ENCODE measurements at regions of chr12 and their contacts with region 1.

Region 1: DNA sequence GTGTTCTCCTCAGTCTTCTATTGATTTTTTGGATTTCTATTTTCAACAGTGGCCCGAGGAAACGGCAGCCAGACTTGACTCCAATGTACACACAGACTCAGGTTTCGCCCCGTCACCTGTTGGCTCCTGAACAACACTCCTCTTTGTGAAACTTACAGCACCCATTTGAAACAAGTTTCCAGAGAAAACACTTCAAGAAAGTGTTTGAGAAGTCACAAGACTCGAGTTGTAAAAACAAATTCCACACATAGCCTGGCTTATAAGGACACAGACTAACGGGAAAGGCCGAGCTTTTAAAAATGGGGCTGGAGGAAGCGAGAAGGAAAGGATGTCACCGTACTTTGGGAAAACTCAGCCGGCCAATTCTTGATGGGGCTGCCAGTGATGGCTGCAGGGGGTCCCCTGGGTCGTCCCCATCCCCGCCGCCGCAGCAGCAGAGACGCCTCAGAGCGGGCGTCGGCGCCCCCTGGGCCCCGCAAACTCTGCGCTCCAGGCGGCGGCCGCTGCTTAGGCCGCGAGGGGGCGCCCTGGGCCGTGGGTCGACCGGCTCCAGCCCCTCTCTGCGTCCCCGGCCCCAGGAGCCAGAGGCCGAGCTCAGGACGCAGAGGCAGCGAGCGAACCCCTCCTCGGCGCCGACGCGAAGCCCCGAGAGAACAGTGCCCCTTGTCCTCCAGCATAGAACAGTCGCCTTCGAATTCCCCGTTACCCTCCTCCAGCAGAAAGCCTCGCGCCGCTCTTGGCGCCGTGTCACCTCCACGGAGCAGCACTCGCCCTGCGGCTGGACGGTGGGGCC is 106.9 kb downstream of the PRICKLE1 start:
- DNase-seq: peak; percentile 61
- H3K4me3 Mint-ChIP-seq: peak overlapping the region; percentile 91
- H3K27ac Mint-ChIP-seq: no peak overlapping the region
- H3K4me1 Mint-ChIP-seq: peaks cover 8% of the 10 kb centered on the region
- H3K27me3 Mint-ChIP-seq: no peaks in the 10 kb centered on the region
- CTCF ChIP-seq: peak; percentile 82

Region 2: DNA sequence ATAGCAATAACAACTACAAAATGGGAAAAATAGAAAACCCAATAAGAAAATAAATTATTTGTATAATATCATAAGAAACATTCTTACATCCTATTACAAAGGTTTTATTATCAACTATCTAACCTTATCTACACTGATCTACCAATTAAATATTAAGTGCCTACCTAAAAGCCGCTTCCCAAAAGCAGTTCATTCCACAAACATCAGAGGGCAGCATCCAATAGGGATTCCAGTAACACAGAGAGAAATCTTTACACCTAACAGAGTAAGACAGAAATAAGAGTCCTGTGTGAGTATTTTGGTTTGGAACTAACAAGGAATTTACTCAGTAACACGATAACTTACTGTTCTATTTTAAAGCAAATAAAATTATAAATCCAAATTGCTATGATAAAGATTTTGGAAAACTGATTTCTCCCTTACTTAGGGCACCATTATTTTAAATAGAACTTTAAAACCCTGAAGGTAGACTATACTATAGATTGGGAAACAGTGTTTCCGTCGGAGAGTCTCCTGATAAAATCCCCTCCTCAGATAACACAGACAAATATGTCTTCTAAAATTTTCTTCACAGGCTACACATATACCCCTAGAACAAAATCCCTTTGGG is 352.9 kb before region 1 on chr12:
- CTCF ChIA-PET with region 1: interaction called, 3 read pairs
- POLR2A ChIA-PET with region 1: interaction called, 3 read pairs
- intact Hi-C with region 1: loop called (anchors 5 kb)
- DNase-seq: peak; percentile 81
- H3K4me3 Mint-ChIP-seq: peak overlapping the region; percentile 66
- H3K27ac Mint-ChIP-seq: peak overlapping the region; percentile 74
- H3K4me1 Mint-ChIP-seq: peaks cover 26% of the 10 kb centered on the region
- H3K27me3 Mint-ChIP-seq: no peaks in the 10 kb centered on the region
- CTCF ChIP-seq: peak; percentile 73

Region 3: GRCh38 chr12:42382013-42382680 is 100.5 kb before region 1 on chr12:
- CTCF ChIA-PET with region 1: no interaction called
- POLR2A ChIA-PET with region 1: no interaction called
- intact Hi-C with region 1: no loop called
- DNase-seq: peak; percentile 39
- H3K4me3 Mint-ChIP-seq: no peak overlapping the region
- H3K27ac Mint-ChIP-seq: no peak overlapping the region
- H3K4me1 Mint-ChIP-seq: peaks cover 13% of the 10 kb centered on the region
- H3K27me3 Mint-ChIP-seq: no peaks in the 10 kb centered on the region
- CTCF ChIP-seq: no peak

Region 4: GRCh38 chr12:42462486-42462885 is 20.2 kb before region 1 on chr12:
- CTCF ChIA-PET with region 1: interaction called, 36 read pairs
- POLR2A ChIA-PET with region 1: no interaction called
- intact Hi-C with region 1: no loop called
- DNase-seq: no peak
- H3K4me3 Mint-ChIP-seq: no peak overlapping the region
- H3K27ac Mint-ChIP-seq: no peak overlapping the region
- H3K4me1 Mint-ChIP-seq: no peaks in the 10 kb centered on the region
- H3K27me3 Mint-ChIP-seq: no peaks in the 10 kb centered on the region
- CTCF ChIP-seq: no peak

Region 5: DNA sequence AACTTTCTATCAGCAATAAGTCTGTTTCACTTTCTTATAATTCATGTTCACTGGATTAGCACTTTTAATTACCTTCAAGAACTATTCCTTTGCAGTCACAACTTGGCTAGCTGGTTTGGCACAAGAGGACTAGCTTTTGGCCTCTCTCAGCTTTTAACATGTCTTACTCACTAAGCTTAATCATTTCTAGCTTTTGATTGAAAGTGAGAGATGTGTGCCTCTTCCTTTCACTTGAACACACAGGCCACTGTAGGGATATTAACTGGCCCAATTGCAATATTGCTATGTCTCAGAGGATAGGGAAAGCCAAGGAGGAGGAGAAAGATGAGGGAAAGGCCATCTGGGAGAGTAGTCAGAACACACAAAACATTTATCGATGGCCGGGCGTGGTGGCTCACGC is 14.2 kb after region 1 on chr12:
- CTCF ChIA-PET with region 1: interaction called, 12 read pairs
- POLR2A ChIA-PET with region 1: interaction called, 7 read pairs
- intact Hi-C with region 1: no loop called
- DNase-seq: no peak
- H3K4me3 Mint-ChIP-seq: no peak overlapping the region
- H3K27ac Mint-ChIP-seq: no peak overlapping the region
- H3K4me1 Mint-ChIP-seq: no peaks in the 10 kb centered on the region
- H3K27me3 Mint-ChIP-seq: no peaks in the 10 kb centered on the region
- CTCF ChIP-seq: no peak

Region 6: DNA sequence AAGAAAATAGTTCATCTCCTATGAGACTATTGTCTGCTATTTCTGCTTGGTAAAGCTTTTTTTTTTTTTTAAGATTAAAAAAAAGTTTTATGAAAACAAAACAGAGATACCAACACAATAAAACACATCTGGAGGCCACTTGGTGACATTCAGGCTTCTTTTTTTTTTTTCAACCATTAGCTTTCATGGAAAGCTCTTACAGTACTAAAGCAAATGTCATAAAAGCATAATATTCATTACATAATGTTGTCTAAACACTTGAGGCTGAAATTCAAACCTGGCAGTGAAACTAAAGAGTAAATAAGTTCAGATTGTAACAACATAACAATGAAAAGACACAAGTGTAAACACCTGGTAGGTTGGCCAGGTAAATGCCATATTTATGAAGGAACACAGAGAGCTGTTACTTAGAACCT is 92.2 kb after region 1 on chr12:
- CTCF ChIA-PET with region 1: interaction called, 48 read pairs
- POLR2A ChIA-PET with region 1: interaction called, 3 read pairs
- intact Hi-C with region 1: no loop called
- DNase-seq: no peak
- H3K4me3 Mint-ChIP-seq: no peak overlapping the region
- H3K27ac Mint-ChIP-seq: no peak overlapping the region
- H3K4me1 Mint-ChIP-seq: no peaks in the 10 kb centered on the region
- H3K27me3 Mint-ChIP-seq: no peaks in the 10 kb centered on the region
- CTCF ChIP-seq: no peak

Region 7: GRCh38 chr12:43282106-43282505 is 799.5 kb after region 1 on chr12:
- CTCF ChIA-PET with region 1: interaction called, 27 read pairs
- POLR2A ChIA-PET with region 1: interaction called, 23 read pairs
- intact Hi-C with region 1: loop called (anchors 1 kb)
- DNase-seq: peak; percentile 28
- H3K4me3 Mint-ChIP-seq: no peak overlapping the region
- H3K27ac Mint-ChIP-seq: no peak overlapping the region
- H3K4me1 Mint-ChIP-seq: peaks cover 24% of the 10 kb centered on the region
- H3K27me3 Mint-ChIP-seq: no peaks in the 10 kb centered on the region
- CTCF ChIP-seq: peak; percentile 62